HepG2 (cell line): ENCODE measurements at regions of chr21 and their contacts with region 1.

Region 1: GRCh38 chr21:44482581-44483287 is 27.4 kb downstream of the LRRC3 start:
- DNase-seq: peak; percentile 99
- ATAC-seq: peak; percentile 90
- H3K4me3 ChIP-seq: peak overlapping the region; percentile 64 to 81 (median 69)
- H3K27ac ChIP-seq: peak overlapping the region; percentile 90
- H3K4me1 ChIP-seq: peaks cover 73% of the 10 kb centered on the region
- H3K27me3 ChIP-seq: no peaks in the 10 kb centered on the region; a peak in 1 of 5 replicates
- CTCF ChIP-seq: no peak
- EP300 ChIP-seq: peak in 1 of 2 experiments; percentile 77; a peak in 1 of 4 replicates
- POLR2A ChIP-seq: peak; percentile 95 to 97
- RAD21 ChIP-seq: no peak

Region 2: GRCh38 chr21:44338971-44339910 is 143.5 kb before region 1 on chr21 and contains the start of gene CFAP410:
- CTCF ChIA-PET with region 1: no interaction called
- POLR2A ChIA-PET with region 1: interaction called, 27 read pairs
- in situ Hi-C with region 1: no loop called
- intact Hi-C with region 1: no loop called
- DNase-seq: peak; percentile 88
- ATAC-seq: peak; percentile 85
- H3K4me3 ChIP-seq: peak within 1 kb of the TSS; percentile 81 to 98 (median 90)
- H3K27ac ChIP-seq: peak within 1 kb of the TSS; percentile 99
- H3K4me1 ChIP-seq: peaks cover 50% of the 10 kb centered on the region
- H3K27me3 ChIP-seq: no peaks in the 10 kb centered on the region; a peak in 1 of 5 replicates
- CTCF ChIP-seq: peak; percentile 25
- EP300 ChIP-seq: 0 out of 4 replicates have a peak, but pooled peaks of 1 of the 2 experiments have one; percentile 3
- POLR2A ChIP-seq: peak in 1 of 2 experiments; percentile 86; a peak in 2 of 4 replicates
- RAD21 ChIP-seq: peak; percentile 46; the same call in 1 of the 2 replicates
- total RNA-seq, gene CFAP410: 13.1 and 20.1 TPM in 2 replicates

Region 3: DNA sequence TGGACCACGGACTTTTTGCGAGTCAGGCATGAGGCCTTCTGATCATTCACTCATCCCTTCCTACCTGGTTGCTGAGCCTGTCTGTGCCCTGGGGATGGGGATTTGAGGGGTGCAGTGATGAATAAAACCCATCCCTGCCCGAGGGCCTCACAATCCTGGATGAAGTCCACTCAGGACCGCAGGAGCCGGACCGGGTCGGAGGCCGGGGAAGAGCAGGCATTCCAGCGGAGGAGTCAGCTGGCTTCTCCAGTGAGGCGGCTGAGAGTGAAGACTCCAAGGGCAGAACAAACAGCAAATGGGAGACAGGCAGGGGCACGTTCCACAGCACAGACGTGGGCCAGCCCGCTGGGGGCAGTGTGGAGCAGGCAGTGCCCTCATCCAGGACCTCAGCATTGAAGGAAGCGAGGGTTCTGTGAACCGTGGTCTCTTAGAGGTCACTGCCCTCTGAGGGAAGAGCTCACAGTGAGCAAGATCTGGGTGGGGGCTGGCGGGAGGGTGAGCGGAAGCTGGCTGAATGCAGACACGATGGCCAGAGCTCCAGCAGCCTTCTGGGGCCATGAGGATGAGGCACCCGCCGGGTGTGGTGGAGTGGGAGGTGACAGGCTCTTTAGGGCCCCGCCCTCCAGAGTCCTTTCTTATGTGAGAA is 38.3 kb before region 1 on chr21:
- CTCF ChIA-PET with region 1: interaction called, 3 read pairs
- POLR2A ChIA-PET with region 1: interaction called, 7 read pairs
- in situ Hi-C with region 1: loop called (anchors 5 kb)
- intact Hi-C with region 1: no loop called
- DNase-seq: peak; percentile 66
- ATAC-seq: peak; percentile 87
- H3K4me3 ChIP-seq: peak overlapping the region in 2 of 3 experiments; percentile 9 to 56; a peak in 1 of 6 replicates
- H3K27ac ChIP-seq: no peak overlapping the region
- H3K4me1 ChIP-seq: peaks cover 53% of the 10 kb centered on the region
- H3K27me3 ChIP-seq: peaks cover 0 to 2% of the 10 kb centered on the region in 2 experiments; a peak in 1 of 5 replicates
- CTCF ChIP-seq: peak; percentile 94
- EP300 ChIP-seq: no peak
- POLR2A ChIP-seq: no peak
- RAD21 ChIP-seq: peak; percentile 70

Region 4: GRCh38 chr21:44461464-44462001 is 21.2 kb before region 1 on chr21:
- CTCF ChIA-PET with region 1: no interaction called
- POLR2A ChIA-PET with region 1: interaction called, 115 read pairs
- in situ Hi-C with region 1: no loop called
- intact Hi-C with region 1: no loop called
- DNase-seq: peak; percentile 35
- ATAC-seq: peak; percentile 73
- H3K4me3 ChIP-seq: no peak overlapping the region
- H3K27ac ChIP-seq: no peak overlapping the region
- H3K4me1 ChIP-seq: peaks cover 60% of the 10 kb centered on the region
- H3K27me3 ChIP-seq: no peaks in the 10 kb centered on the region
- CTCF ChIP-seq: peak; percentile 80
- EP300 ChIP-seq: no peak
- POLR2A ChIP-seq: no peak; a peak in 1 of 4 replicates
- RAD21 ChIP-seq: peak; percentile 73

Region 5: GRCh38 chr21:44503901-44504399 is 21.2 kb after region 1 on chr21:
- CTCF ChIA-PET with region 1: no interaction called
- POLR2A ChIA-PET with region 1: interaction called, 38 read pairs
- in situ Hi-C with region 1: no loop called
- intact Hi-C with region 1: no loop called
- DNase-seq: no peak
- ATAC-seq: no peak
- H3K4me3 ChIP-seq: no peak overlapping the region
- H3K27ac ChIP-seq: no peak overlapping the region
- H3K4me1 ChIP-seq: peaks cover 39% of the 10 kb centered on the region
- H3K27me3 ChIP-seq: no peaks in the 10 kb centered on the region; a peak in 1 of 5 replicates
- CTCF ChIP-seq: no peak
- EP300 ChIP-seq: no peak
- POLR2A ChIP-seq: no peak
- RAD21 ChIP-seq: no peak